PC-9 (cell line): ENCODE measurements at regions of chr1 and their contacts with region 1.

Region 1: DNA sequence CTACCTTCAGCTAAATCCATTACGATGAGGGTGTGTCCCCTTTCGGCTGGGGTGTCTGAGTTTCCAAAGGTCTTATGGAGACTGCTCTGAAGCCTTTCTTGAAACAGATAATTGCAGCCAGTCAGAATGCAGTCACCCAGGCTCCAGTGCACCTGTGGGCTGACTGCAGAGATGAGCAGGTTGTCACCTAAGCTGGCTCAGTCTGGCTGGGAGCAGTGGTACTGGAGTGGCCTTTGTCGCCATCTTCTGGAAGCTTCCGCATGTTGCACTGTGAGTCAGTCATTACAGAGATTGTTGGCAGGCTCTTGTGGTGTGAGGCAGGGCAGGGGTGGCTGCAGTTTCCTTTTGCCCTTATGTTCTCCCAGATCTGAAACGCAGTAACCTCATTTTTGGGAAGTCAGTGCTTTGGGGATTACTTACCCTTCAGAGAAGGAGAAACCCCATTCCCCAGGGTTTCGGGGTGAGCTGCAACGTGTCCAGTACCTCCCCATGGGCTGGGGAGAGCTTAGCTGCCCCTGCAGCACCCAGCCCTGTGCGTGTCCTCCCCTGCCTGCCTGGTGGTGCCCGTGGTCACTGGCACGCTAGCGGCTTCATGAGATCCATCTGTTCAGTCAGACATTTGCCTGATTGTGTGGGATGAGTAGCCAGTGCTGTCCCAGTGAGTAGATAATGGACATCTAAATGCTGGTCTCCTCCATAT is 48.0 kb downstream of the SMYD2 start:
- DNase-seq: peak; percentile 68 to 78
- H3K4me3 ChIP-seq: no peak overlapping the region
- H3K27ac ChIP-seq: no peak overlapping the region
- H3K4me1 ChIP-seq: peaks cover 15% of the 10 kb centered on the region; the same call in 1 of the 2 replicates
- H3K27me3 ChIP-seq: no peaks in the 10 kb centered on the region
- CTCF ChIP-seq: peak; percentile 89

Region 2: DNA sequence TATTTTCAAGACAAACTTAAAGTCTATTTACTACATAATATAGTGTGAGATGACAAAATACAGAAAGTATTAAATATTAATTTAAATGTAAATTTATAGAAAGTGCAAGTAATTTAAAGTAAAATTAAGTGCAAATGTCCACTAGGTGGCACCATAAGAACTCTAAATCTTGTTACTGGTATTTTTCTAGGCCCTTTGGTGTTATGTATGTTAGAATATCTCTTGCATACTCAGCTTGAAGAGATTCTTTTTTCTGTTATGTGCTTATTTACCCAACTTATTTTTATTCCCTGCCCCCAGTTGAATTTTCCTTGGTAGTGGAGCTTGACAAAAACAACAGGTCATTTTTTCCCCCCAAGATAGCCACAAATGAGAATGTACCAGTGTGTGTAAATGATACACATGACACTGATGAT is 1206.4 kb before region 1 on chr1:
- CTCF ChIA-PET with region 1: no interaction called
- POLR2A ChIA-PET with region 1: no interaction called
- intact Hi-C with region 1: loop called (anchors 5 kb)
- DNase-seq: no peak
- H3K4me3 ChIP-seq: no peak overlapping the region
- H3K27ac ChIP-seq: no peak overlapping the region
- H3K4me1 ChIP-seq: peaks cover 17% of the 10 kb centered on the region
- H3K27me3 ChIP-seq: no peaks in the 10 kb centered on the region
- CTCF ChIP-seq: peak; percentile 71

Region 3: DNA sequence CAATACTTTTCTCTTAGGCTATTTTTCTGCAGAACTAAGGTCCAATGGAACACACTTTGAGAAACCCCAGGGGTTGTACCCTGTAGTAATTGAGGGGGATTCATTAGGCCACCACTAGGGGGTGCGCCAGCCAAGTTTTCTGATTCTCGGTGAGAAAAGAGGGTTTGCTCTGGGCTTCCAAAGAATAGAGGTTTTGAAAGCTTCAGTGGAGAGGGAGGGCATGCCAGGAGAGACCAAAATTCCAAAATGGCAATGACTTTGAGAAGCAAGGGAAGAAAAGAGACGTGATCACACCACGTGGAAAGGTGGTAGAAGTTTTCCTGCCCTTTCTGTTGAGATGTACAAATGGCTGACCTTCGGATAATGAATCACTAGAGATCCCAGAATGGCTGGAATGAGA is 954.6 kb before region 1 on chr1:
- CTCF ChIA-PET with region 1: no interaction called
- POLR2A ChIA-PET with region 1: no interaction called
- intact Hi-C with region 1: loop called (anchors 2 kb)
- DNase-seq: peak in 1 of 2 experiments; percentile 37
- H3K4me3 ChIP-seq: no peak overlapping the region
- H3K27ac ChIP-seq: no peak overlapping the region
- H3K4me1 ChIP-seq: no peaks in the 10 kb centered on the region
- H3K27me3 ChIP-seq: no peaks in the 10 kb centered on the region
- CTCF ChIP-seq: peak; percentile 97

Region 4: GRCh38 chr1:214213136-214213535 is 115.8 kb before region 1 on chr1:
- CTCF ChIA-PET with region 1: interaction called, 73 read pairs
- POLR2A ChIA-PET with region 1: interaction called, 6 read pairs
- intact Hi-C with region 1: loop called (anchors 1 kb)
- DNase-seq: peak; percentile 18 to 87
- H3K4me3 ChIP-seq: no peak overlapping the region
- H3K27ac ChIP-seq: peak overlapping the region; percentile 15; the same call in 1 of the 2 replicates
- H3K4me1 ChIP-seq: peaks cover 56% of the 10 kb centered on the region
- H3K27me3 ChIP-seq: no peaks in the 10 kb centered on the region
- CTCF ChIP-seq: no peak

Region 5: DNA sequence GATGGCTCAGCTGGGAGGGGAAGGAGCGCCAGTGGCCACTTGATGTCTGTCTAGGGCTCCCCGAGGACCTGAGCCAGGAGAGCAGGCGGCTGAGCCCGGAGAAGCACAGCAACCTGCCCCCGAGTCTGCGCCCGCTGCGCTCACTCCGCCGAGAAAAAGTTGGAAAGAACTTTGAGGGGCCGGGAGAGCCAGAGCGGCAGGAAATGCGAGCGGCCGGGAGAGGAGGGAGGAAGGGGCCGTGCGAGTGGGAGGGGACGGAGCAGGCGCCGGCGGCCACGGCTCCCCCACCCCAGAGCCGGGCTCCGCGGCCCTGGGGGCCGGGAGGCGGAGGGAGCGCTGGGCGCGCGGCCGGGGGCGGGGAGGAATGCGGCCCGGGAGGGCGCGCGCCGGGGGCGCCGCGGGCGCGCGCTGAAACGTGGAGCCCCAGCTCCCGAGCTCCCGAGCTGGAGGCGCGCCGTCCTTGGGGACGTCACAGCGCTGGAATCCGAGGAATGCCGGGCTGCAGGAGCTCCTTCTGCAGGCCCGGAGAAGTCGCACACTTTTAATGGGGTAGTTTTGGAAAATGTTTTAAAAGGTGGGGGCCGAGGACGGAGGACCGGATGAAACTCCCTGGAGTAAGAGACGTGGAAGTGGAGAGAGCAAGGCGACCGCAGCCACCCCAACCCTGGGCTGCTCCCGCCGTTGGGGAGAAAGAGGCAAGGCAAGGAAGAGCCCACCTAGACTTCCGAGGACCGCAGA is 222.7 kb after region 1 on chr1 and contains the start of gene PTPN14:
- CTCF ChIA-PET with region 1: interaction called, 3 read pairs
- POLR2A ChIA-PET with region 1: interaction called, 3 read pairs
- intact Hi-C with region 1: loop called (anchors 1 kb)
- DNase-seq: peak; percentile 89 to 93
- H3K4me3 ChIP-seq: peak within 1 kb of the TSS; percentile 71
- H3K27ac ChIP-seq: peak within 1 kb of the TSS; percentile 97
- H3K4me1 ChIP-seq: peaks cover 48% of the 10 kb centered on the region
- H3K27me3 ChIP-seq: no peaks in the 10 kb centered on the region
- CTCF ChIP-seq: no peak; the same call in 1 of the 2 replicates
- total RNA-seq, gene PTPN14: 59.2 and 78.9 TPM in 2 replicates

Region 6: DNA sequence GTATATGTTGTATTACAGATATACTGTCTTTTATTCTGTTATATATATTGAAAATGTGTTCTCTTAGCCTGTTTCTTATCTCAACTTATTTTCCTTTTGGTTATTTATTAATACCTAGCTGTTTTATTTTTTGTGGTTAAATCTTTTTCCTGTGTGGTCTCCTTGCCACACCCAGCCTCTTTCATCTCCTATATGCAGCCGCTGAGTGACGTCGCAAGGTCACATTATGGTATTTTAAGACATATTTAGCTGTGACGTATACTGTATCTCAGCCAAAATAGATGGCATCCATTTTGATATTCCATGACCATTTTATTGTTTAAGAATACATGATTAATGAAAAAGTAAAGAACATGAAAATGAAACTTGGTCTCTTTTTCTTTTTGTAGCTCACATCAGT is 303.2 kb after region 1 on chr1:
- CTCF ChIA-PET with region 1: interaction called, 17 read pairs
- POLR2A ChIA-PET with region 1: no interaction called
- intact Hi-C with region 1: loop called (anchors 1 kb)
- DNase-seq: no peak
- H3K4me3 ChIP-seq: no peak overlapping the region
- H3K27ac ChIP-seq: no peak overlapping the region
- H3K4me1 ChIP-seq: no peaks in the 10 kb centered on the region
- H3K27me3 ChIP-seq: no peaks in the 10 kb centered on the region
- CTCF ChIP-seq: no peak

Region 7: DNA sequence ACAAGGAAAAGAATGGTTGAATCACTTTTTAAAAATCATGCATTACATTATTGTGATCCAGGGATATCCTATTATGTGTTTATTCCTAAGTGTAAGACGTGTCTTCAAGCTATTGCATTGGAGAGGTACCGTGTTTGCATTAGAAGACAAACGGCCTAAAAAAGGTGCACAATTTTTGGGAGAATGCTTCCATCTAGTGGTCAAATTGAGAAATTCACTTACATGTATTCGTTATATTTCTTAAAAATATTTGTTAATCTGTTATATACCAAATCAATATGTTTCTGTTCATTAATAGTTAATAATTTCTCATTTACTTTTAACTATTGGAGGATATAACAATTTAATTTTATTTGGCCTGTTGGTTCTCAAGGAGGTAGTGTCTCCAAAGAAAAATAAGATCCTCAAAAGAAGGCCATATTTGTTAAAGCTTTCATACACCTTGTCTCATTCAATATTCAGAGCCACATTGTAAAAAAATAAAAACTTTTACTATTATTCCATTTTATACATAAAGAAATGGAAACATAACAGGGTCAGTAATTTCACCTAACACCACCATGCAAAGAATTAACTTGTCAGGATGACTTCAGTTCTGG is 1197.7 kb after region 1 on chr1:
- CTCF ChIA-PET with region 1: no interaction called
- POLR2A ChIA-PET with region 1: no interaction called
- intact Hi-C with region 1: loop called (anchors 2 kb)
- DNase-seq: no peak
- H3K4me3 ChIP-seq: no peak overlapping the region
- H3K27ac ChIP-seq: no peak overlapping the region
- H3K4me1 ChIP-seq: no peaks in the 10 kb centered on the region
- H3K27me3 ChIP-seq: no peaks in the 10 kb centered on the region
- CTCF ChIP-seq: peak; percentile 90